T-cell (primary cell): ENCODE measurements at regions of chr7 and their contacts with region 1.

Region 1: DNA sequence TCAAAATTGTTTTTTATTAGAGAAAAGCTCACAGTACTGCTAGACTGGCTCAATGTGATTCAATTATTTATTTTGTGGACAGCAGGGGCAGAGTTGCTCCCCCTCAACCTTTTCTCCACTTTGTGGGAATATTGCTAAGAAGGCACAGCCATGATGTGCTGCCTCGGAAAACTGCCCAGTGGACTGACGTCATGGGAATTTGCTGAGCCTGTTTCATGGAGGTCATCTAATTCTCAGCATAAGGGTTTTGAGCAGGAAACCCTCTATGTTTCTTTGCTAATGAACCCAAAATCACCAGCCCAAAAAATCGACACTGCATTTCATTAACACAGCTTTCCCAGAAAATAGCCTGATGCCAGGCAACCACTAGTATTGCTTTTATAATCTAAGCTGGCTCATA is 228.8 kb upstream of the FAM3C start:
- DNase-seq: no peak
- ATAC-seq: no peak
- H3K4me3 ChIP-seq: no peak overlapping the region
- H3K4me3 Mint-ChIP-seq: no peak overlapping the region
- H3K27ac ChIP-seq: no peak overlapping the region
- H3K27ac Mint-ChIP-seq: no peak overlapping the region
- H3K4me1 ChIP-seq: no peaks in the 10 kb centered on the region
- H3K4me1 Mint-ChIP-seq: no peaks in the 10 kb centered on the region
- H3K27me3 ChIP-seq: peaks cover 0 to 2% of the 10 kb centered on the region in 2 experiments
- H3K27me3 Mint-ChIP-seq: peaks cover 0 to 3% of the 10 kb centered on the region in 2 donors

Region 2: DNA sequence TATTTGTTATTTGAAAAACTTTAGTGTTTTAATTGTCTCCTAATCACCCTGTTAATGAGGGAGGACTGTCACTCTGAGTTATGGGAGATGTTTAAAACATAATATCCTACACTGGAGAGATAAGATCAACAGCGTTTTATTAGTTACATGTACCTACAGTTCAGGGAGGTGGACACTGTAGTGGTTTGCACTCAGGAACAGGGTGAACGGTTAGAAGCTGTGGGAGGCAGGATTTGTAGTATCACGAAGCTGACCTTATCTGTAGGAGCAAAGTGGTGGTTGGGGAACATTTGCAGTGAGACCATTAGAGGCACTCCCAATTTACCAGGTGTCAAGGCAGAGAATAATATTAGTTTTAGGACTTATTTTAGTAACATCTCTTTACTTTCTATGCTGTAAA is 1545.3 kb before region 1 on chr7:
- CTCF ChIA-PET with region 1: no interaction called
- POLR2A ChIA-PET with region 1: interaction called in 1 of 2 experiments, 12 read pairs
- DNase-seq: no peak
- ATAC-seq: no peak
- H3K4me3 ChIP-seq: no peak overlapping the region
- H3K4me3 Mint-ChIP-seq: no peak overlapping the region
- H3K27ac ChIP-seq: no peak overlapping the region
- H3K27ac Mint-ChIP-seq: no peak overlapping the region
- H3K4me1 ChIP-seq: no peaks in the 10 kb centered on the region
- H3K4me1 Mint-ChIP-seq: no peaks in the 10 kb centered on the region
- H3K27me3 ChIP-seq: no peaks in the 10 kb centered on the region
- H3K27me3 Mint-ChIP-seq: no peaks in the 10 kb centered on the region

Region 3: DNA sequence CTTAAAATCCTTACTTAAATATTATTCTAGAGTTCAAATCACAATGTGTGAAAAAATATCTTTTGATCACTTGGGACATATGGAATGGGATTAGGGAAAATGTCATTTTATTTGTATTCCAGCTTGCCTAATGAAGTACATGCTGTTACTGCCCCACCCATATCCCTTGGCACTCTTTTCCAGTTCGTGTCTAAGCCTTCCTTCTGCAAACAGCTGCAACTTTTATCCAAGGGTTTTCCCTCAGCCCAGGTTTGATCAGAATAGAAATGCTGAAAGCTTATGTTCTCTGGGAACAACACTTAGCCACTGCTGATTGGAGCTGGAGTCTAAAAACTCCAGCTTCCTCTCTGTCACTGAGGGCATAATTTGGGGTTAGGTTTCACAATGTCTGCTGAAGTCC is 14.7 kb before region 1 on chr7:
- CTCF ChIA-PET with region 1: no interaction called
- POLR2A ChIA-PET with region 1: no interaction called
- DNase-seq: no peak
- ATAC-seq: no peak
- H3K4me3 ChIP-seq: no peak overlapping the region
- H3K4me3 Mint-ChIP-seq: no peak overlapping the region
- H3K27ac ChIP-seq: no peak overlapping the region
- H3K27ac Mint-ChIP-seq: no peak overlapping the region
- H3K4me1 ChIP-seq: no peaks in the 10 kb centered on the region
- H3K4me1 Mint-ChIP-seq: no peaks in the 10 kb centered on the region
- H3K27me3 ChIP-seq: no peaks in the 10 kb centered on the region
- H3K27me3 Mint-ChIP-seq: peaks cover 2 to 9% of the 10 kb centered on the region in 2 donors

Region 4: DNA sequence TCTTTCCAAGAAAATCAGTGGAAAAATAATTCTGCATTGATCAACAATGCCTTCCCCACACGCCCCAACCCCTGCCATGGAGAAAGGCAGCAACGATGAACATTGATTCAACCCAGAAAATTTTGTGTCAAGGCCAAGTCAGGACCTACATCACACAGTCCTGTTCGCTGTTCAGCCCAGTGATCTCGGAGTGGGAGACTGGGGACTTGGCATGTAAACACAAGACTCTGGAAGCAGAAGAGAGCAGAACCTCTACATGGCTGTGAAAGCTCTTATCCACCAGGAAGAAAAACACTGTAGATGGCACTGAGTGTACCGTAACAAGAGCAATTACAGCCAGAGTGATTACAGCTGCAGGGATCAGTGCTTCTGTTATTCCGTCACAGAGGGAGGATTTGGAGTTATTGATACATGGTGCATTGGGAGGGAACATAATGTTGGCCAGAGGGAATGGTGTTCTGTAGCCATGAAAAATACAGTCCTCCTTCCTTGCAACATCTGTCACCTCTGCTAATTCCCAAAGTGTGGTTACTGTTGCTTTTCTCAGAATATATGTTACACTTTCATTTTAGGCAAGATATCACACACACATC is 1772.9 kb after region 1 on chr7:
- CTCF ChIA-PET with region 1: no interaction called
- POLR2A ChIA-PET with region 1: interaction called in 1 of 2 experiments, 11 read pairs
- DNase-seq: no peak
- ATAC-seq: no peak
- H3K4me3 ChIP-seq: no peak overlapping the region
- H3K4me3 Mint-ChIP-seq: no peak overlapping the region
- H3K27ac ChIP-seq: no peak overlapping the region
- H3K27ac Mint-ChIP-seq: no peak overlapping the region
- H3K4me1 ChIP-seq: no peaks in the 10 kb centered on the region
- H3K4me1 Mint-ChIP-seq: no peaks in the 10 kb centered on the region
- H3K27me3 ChIP-seq: no peaks in the 10 kb centered on the region
- H3K27me3 Mint-ChIP-seq: no peaks in the 10 kb centered on the region